Endothelial cell of umbilical vein (primary cell): ENCODE measurements at regions of chr12 and their contacts with region 1.

Region 1: DNA sequence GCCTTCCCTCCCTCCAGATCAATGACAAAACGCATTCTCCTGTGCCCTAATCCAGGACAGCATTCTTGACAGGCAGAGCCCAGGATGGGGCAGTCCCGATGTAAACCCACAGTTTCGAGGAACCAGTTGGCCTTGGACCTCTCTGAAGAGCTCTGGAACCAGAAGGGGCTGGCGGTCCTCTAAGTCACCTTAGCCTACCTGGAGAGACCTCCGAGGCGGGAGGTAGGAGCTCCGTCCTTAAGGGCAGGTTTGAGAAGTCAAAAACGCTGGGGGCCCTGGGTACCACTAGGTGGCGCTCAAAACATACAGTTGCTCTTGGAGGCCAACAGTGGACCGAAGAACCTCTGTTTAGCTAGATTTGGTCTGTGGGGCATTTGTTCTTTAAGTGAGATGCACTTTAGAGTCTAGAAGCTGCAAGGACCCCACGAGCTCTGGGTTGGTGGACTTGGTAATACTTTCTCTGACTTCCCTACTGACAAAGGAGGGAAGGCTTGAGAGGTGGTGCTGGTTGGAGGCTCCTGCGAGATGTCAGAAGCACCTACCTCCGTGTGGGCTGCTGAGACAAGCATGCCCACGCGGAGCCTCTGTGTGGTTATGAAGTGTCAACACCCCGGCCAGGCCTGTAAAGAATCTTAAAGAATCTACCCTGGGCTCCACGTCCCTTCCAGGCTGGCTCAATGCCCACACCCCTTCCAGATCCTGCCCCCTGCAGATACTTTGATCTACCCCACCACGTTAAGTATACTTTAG is 74.8 kb upstream of the CHST11 start:
- DNase-seq: peak; percentile 77
- H3K4me3 ChIP-seq: no peak overlapping the region
- H3K27ac ChIP-seq: no peak overlapping the region
- H3K4me1 ChIP-seq: no peaks in the 10 kb centered on the region
- H3K27me3 ChIP-seq: no peaks in the 10 kb centered on the region
- CTCF ChIP-seq: peak; percentile 90 to 93
- POLR2A ChIP-seq: no peak

Region 2: DNA sequence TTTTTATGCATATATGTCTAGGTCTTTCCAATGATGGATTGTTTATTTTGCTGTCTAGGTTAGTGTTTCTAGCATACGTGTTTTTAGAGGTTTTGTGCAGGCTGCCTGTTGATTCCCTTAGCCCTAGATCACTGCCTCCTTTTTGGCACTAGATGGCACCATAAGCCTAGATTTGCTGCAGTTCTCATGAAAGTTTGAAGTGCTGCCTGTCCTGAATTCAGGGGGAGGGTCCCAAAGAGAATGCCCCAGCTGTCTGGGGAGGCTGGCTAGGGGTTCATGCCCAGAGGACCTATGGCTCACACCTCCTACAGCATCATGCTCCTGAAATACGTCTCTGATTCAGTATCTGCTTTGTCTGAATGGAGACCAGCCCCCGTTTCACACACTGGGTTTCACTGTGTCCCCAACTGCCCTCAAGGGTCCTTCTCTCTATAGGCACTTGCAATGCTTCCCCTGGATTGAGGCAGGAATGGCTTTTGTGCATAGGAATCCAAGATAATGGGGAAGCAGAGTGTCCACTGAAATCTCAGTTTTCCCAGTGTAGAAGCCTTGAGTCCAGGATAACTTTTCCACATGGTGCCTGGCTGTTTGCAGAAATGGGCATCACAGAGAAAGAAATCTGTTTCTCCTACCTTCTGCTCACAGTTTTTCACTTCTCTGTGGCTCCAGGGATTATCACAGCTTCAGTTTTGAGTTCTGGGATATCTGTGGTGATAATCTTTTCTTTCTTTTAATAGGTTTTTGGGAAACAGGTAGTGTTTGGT is 180.5 kb before region 1 on chr12:
- CTCF ChIA-PET with region 1: interaction called, 13 read pairs
- POLR2A ChIA-PET with region 1: no interaction called
- dilution Hi-C with region 1: no loop called
- intact Hi-C with region 1: loop called (anchors 1 kb)
- DNase-seq: peak; percentile 74
- H3K4me3 ChIP-seq: no peak overlapping the region
- H3K27ac ChIP-seq: no peak overlapping the region
- H3K4me1 ChIP-seq: no peaks in the 10 kb centered on the region
- H3K27me3 ChIP-seq: peaks cover 0 to 3% of the 10 kb centered on the region in 2 experiments
- CTCF ChIP-seq: peak; percentile 79 to 83
- POLR2A ChIP-seq: no peak

Region 3: GRCh38 chr12:104448451-104448850 is 66.5 kb after region 1 on chr12:
- CTCF ChIA-PET with region 1: interaction called, 14 read pairs
- POLR2A ChIA-PET with region 1: no interaction called
- dilution Hi-C with region 1: no loop called
- intact Hi-C with region 1: no loop called
- DNase-seq: peak; percentile 9
- H3K4me3 ChIP-seq: no peak overlapping the region
- H3K27ac ChIP-seq: no peak overlapping the region
- H3K4me1 ChIP-seq: no peaks in the 10 kb centered on the region
- H3K27me3 ChIP-seq: peaks cover 0 to under 1% of the 10 kb centered on the region in 2 experiments
- CTCF ChIP-seq: no peak
- POLR2A ChIP-seq: no peak

Region 4: DNA sequence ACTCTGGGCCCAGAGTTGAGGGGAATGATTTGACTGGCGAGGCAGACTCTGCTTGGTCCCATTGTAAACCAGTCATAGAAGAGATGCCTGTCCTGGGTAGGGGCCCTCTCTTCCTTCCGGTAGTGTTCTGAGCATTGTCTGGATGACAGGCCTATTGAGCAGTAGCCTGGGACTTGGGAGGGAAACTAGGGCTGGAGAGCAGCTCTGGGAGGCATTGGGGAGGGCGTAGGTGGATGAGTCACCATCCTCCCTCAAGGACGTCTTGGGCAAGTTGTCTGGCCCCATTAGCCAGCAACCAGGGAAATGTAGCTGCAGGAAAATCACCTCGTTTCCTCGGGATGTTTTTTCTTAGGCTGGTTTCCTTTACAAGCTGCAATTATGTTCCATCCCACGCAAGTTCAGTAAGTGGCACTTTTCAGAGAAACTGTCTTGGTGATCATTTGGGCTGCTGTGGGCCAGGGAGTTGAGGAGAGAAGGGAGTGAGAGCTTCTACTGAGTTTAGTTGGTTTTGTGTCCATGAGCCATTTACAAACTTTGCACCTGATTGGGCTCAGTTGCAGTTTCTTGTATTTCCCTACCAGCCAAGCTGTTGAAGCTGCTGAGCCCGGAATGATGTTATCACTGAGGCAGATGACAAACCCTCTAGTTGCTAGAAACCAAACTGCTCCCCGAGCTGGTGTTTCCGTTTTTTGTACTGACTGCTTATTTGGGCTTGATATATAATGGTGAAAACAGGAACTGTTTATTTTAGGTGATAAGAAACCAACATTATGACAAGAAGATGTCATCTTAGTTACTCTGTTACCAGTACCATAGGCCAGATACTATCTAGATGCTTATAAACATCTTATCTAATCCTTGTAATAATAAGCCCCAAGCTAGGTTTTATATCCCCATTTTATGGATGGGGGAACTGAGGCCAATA is 222.4 kb after region 1 on chr12:
- CTCF ChIA-PET with region 1: interaction called, 18 read pairs
- POLR2A ChIA-PET with region 1: interaction called, 3 read pairs
- dilution Hi-C with region 1: no loop called
- intact Hi-C with region 1: loop called (anchors 5 kb)
- DNase-seq: peak; percentile 98
- H3K4me3 ChIP-seq: peak overlapping the region in 1 of 3 experiments; percentile 38
- H3K27ac ChIP-seq: peak overlapping the region; percentile 89
- H3K4me1 ChIP-seq: peaks cover 35% of the 10 kb centered on the region
- H3K27me3 ChIP-seq: no peaks in the 10 kb centered on the region
- CTCF ChIP-seq: no peak
- POLR2A ChIP-seq: peak; percentile 30

Region 5: DNA sequence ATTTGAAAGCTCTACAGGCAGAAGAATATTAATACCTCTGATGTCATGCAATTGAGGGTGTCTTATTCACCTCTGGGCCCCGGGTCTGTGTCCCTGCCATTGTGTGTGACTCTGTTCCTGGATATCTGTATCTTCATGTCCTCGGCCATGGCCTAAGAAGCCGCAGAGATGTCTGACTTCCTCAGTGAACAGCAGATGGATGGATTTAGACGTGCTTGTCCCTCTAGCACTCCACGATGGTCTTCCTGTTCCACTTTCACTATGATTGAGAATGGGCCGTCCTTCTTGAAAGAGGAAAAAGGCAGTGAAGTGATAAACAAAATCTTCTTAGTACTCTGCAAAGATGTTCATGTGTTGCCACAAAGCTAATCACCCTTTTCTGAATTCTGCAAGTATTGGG is 358.8 kb after region 1 on chr12:
- CTCF ChIA-PET with region 1: interaction called, 10 read pairs
- POLR2A ChIA-PET with region 1: no interaction called
- dilution Hi-C with region 1: no loop called
- intact Hi-C with region 1: no loop called
- DNase-seq: no peak
- H3K4me3 ChIP-seq: no peak overlapping the region
- H3K27ac ChIP-seq: no peak overlapping the region
- H3K4me1 ChIP-seq: no peaks in the 10 kb centered on the region
- H3K27me3 ChIP-seq: no peaks in the 10 kb centered on the region
- CTCF ChIP-seq: no peak
- POLR2A ChIP-seq: no peak

Region 6: DNA sequence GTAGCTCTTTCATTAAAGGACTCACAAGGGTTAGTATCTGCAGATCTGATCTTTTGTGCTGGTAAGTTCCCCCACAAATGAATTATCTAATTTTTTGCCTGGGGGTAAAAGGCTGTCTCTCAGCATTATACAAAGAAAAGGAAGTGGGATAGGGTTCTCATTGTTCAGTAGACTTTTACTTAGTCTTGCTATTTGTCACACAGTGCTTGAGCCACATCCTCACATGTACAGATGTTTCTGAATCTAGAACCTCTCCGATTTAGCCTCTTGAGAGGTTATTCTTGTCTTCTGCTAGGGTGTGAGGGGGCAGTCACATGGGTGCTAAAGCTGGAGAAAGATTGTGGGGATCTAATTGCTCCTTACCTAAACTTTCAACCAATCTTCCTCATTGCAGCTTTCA is 483.2 kb after region 1 on chr12:
- CTCF ChIA-PET with region 1: interaction called, 27 read pairs
- POLR2A ChIA-PET with region 1: no interaction called
- dilution Hi-C with region 1: no loop called
- intact Hi-C with region 1: no loop called
- DNase-seq: no peak
- H3K4me3 ChIP-seq: no peak overlapping the region
- H3K27ac ChIP-seq: no peak overlapping the region
- H3K4me1 ChIP-seq: no peaks in the 10 kb centered on the region
- H3K27me3 ChIP-seq: no peaks in the 10 kb centered on the region
- CTCF ChIP-seq: no peak
- POLR2A ChIP-seq: no peak

Region 7: GRCh38 chr12:104958009-104958945 is 576.4 kb after region 1 on chr12 and contains the start of gene SLC41A2:
- CTCF ChIA-PET with region 1: interaction called, 23 read pairs
- POLR2A ChIA-PET with region 1: no interaction called
- dilution Hi-C with region 1: no loop called
- intact Hi-C with region 1: no loop called
- DNase-seq: peak; percentile 81
- H3K4me3 ChIP-seq: peak within 1 kb of the TSS; percentile 72 to 89 (median 78)
- H3K27ac ChIP-seq: peak within 1 kb of the TSS; percentile 72
- H3K4me1 ChIP-seq: peaks cover 21% of the 10 kb centered on the region
- H3K27me3 ChIP-seq: peaks cover 0 to 5% of the 10 kb centered on the region in 2 experiments
- CTCF ChIP-seq: no peak
- POLR2A ChIP-seq: peak; percentile 51
- total RNA-seq, gene SLC41A2: 7.5 and 8.0 TPM in 2 replicates